Activated CD4-positive, alpha-beta memory T cell treated with anti-CD3 and anti-CD28 coated beads for 36 hours (primary cell): ENCODE measurements at regions of chr2 and their contacts with region 1.

Region 1: DNA sequence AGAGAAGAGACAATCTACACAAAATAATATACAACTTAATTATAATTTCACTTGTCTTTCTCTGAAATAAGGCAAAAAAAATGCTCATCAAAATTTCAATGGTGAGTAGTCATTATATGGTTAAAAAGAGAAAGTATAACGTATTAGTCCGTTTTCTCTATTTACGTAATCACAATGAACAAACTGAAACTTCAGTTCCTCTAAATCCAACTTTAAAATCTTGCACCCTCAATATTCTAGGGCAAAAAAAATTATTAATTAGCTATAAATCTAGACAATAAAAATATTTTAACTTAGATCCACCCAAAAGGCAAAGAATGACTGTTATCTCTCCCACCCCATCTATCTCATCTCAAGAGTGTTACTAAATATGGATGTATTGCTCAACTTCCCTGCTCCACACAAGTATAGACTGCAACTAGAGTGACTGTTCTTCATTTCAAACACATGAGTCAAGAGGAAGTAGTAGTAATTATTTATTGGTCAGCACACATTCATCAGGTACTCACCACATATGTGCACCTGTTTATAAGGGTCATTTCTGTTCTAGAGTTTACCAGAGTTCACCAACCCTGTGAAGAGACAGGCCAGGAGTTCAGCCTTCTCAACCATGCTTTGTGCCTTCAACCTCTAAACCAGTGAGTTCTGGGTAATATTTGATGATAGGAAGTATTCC is 36.4 kb downstream of the STK39 start:
- DNase-seq: no peak
- H3K4me3 Mint-ChIP-seq: peak overlapping the region; percentile 54
- H3K27ac Mint-ChIP-seq: peak overlapping the region; percentile 98
- H3K4me1 Mint-ChIP-seq: peaks cover 78% of the 10 kb centered on the region
- H3K27me3 Mint-ChIP-seq: no peaks in the 10 kb centered on the region

Region 2: GRCh38 chr2:167550448-167550847 is 660.6 kb before region 1 on chr2:
- CTCF ChIA-PET with region 1: no interaction called
- POLR2A ChIA-PET with region 1: no interaction called
- intact Hi-C with region 1: no loop called
- DNase-seq: no peak
- H3K4me3 Mint-ChIP-seq: no peak overlapping the region
- H3K27ac Mint-ChIP-seq: no peak overlapping the region
- H3K4me1 Mint-ChIP-seq: no peaks in the 10 kb centered on the region
- H3K27me3 Mint-ChIP-seq: no peaks in the 10 kb centered on the region

Region 3: DNA sequence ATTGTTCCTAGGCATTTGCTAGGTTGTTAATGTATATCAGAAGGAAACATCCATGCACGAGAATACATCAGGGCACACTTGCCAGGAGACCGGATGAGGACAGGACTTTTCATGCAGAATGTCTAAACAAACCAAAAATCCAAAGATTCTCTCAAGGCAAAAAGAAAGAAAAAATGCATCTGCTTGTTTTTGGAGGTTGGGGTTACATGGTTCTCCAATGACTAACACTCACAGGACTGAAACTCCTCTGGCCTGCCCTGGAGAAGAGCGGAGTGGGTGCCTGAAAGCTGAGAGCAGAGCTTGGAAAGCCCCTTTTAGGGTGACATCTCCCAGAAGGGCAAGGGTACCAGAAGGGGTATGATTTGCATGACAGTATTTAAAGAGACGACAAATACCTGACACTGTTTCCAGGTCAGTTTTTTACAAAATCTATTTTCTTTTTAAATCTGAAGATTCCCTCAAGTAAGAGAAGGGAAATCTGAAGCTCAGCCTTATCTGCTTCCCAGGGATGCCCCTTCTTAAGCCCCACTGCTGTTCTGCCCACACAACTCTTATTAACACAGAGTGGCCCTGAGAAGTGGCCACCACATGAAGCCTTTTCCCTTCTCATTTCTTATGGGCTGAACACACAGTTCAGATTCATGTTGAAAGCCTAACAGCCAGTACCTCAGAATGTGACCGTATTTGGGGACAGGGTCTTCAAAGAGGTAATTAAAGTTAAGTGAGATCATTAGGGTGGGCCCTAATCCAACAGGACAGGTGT is 180.0 kb before region 1 on chr2:
- CTCF ChIA-PET with region 1: no interaction called
- POLR2A ChIA-PET with region 1: no interaction called
- intact Hi-C with region 1: loop called (anchors 5 kb)
- DNase-seq: peak; percentile 50
- H3K4me3 Mint-ChIP-seq: no peak overlapping the region
- H3K27ac Mint-ChIP-seq: peak overlapping the region; percentile 49
- H3K4me1 Mint-ChIP-seq: peaks cover 19% of the 10 kb centered on the region
- H3K27me3 Mint-ChIP-seq: no peaks in the 10 kb centered on the region

Region 4: DNA sequence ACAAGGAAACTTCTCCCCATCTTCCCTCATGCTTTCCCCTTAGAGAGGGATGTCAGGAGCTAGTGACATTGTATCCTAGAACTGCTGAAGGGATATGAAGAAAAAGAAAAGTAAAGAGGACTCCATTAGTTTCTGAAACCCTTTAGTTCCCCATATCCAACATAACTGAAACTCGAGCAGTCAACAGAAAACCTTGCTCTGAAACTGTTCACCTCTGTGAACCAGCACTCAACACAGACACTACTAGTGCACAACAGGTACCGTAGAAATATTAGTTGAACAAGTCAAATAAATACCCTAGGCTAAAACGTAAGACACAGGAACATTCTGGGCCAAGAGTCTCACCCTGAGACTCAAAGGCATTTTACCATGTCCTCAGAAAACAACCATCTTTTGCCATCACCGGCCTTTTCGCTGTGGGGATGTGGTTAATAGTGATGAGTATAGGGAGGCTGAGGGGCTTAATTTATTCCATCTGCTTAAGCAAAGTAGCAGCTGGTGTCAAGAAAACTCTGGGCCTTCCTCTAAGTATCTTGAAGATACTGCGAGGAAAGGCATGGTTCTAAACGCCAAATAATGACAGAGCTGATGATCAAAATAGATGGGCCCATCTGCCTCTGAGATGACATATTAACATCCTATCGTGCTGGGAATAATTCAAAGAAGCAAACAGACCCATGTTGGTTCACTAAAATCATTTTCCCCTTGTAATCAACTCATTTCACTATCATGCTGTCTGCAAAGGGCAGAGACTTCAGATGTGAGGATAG is 120.5 kb before region 1 on chr2:
- CTCF ChIA-PET with region 1: no interaction called
- POLR2A ChIA-PET with region 1: no interaction called
- intact Hi-C with region 1: no loop called
- DNase-seq: no peak
- H3K4me3 Mint-ChIP-seq: no peak overlapping the region
- H3K27ac Mint-ChIP-seq: no peak overlapping the region
- H3K4me1 Mint-ChIP-seq: peaks cover 24% of the 10 kb centered on the region
- H3K27me3 Mint-ChIP-seq: no peaks in the 10 kb centered on the region

Region 5: GRCh38 chr2:168174756-168175155 is 36.3 kb before region 1 on chr2:
- CTCF ChIA-PET with region 1: no interaction called
- POLR2A ChIA-PET with region 1: interaction called, 3 read pairs
- intact Hi-C with region 1: loop called (anchors 2 kb)
- DNase-seq: peak; percentile 25
- H3K4me3 Mint-ChIP-seq: no peak overlapping the region
- H3K27ac Mint-ChIP-seq: peak overlapping the region; percentile 29
- H3K4me1 Mint-ChIP-seq: peaks cover 48% of the 10 kb centered on the region
- H3K27me3 Mint-ChIP-seq: no peaks in the 10 kb centered on the region

Region 6: DNA sequence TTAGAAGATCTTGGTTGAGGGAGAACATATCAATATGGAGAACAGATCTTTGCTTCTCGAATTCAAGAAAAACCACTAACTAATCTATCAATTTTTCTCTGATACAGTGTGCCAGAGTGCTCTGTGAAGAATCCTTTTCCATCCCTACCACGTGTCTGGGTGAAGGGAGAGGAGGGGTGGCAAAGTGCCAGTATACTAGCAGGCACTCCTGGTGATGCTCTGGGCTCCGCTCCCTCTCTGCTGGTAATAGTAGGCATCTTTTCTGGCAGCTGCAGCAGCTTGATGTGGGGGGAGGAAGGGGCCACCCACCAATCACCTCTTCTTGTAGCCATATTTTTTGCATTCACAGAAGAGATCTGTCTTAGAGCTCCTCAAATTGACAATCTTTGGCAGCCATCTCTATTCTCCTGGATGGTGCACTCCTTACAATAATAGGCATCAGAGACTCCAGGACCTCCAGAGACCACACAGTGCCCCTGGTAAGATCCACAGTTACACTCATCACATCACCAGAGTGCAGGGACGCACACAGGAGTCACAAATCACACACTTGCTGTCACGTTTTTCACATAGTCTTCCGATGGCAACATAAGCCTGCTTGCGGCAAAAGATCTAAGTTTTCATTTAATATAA is 20.7 kb after region 1 on chr2:
- CTCF ChIA-PET with region 1: no interaction called
- POLR2A ChIA-PET with region 1: interaction called, 13 read pairs
- intact Hi-C with region 1: loop called (anchors 1 kb)
- DNase-seq: no peak
- H3K4me3 Mint-ChIP-seq: no peak overlapping the region
- H3K27ac Mint-ChIP-seq: no peak overlapping the region
- H3K4me1 Mint-ChIP-seq: peaks cover 46% of the 10 kb centered on the region
- H3K27me3 Mint-ChIP-seq: no peaks in the 10 kb centered on the region

Region 7: GRCh38 chr2:168552450-168552856 is 341.4 kb after region 1 on chr2:
- CTCF ChIA-PET with region 1: no interaction called
- POLR2A ChIA-PET with region 1: no interaction called
- intact Hi-C with region 1: no loop called
- DNase-seq: no peak
- H3K4me3 Mint-ChIP-seq: no peak overlapping the region
- H3K27ac Mint-ChIP-seq: no peak overlapping the region
- H3K4me1 Mint-ChIP-seq: peaks cover 4% of the 10 kb centered on the region
- H3K27me3 Mint-ChIP-seq: no peaks in the 10 kb centered on the region